CD8-positive, alpha-beta T cell (primary cell): ENCODE measurements at regions of chr4 and their contacts with region 1.

Region 1: GRCh38 chr4:70651864-70652506 is 14.3 kb downstream of the JCHAIN start:
- DNase-seq: peak in 2 of 9 experiments; percentile 38 to 54
- ATAC-seq: no peak
- H3K4me3 ChIP-seq: no peak overlapping the region
- H3K4me3 Mint-ChIP-seq: no peak overlapping the region
- H3K27ac ChIP-seq: no peak overlapping the region
- H3K27ac Mint-ChIP-seq: no peak overlapping the region
- H3K4me1 ChIP-seq: no peaks in the 10 kb centered on the region
- H3K4me1 Mint-ChIP-seq: peaks cover 6% of the 10 kb centered on the region
- H3K27me3 ChIP-seq: peaks cover 0 to 4% of the 10 kb centered on the region in 2 experiments
- H3K27me3 Mint-ChIP-seq: no peaks in the 10 kb centered on the region
- CTCF ChIP-seq: peak; percentile 68

Region 2: GRCh38 chr4:69497076-69497475 is 1154.9 kb before region 1 on chr4:
- CTCF ChIA-PET with region 1: no interaction called
- POLR2A ChIA-PET with region 1: no interaction called
- intact Hi-C with region 1: no loop called
- DNase-seq: no peak
- ATAC-seq: no peak
- H3K4me3 ChIP-seq: no peak overlapping the region
- H3K4me3 Mint-ChIP-seq: no peak overlapping the region
- H3K27ac ChIP-seq: no peak overlapping the region
- H3K27ac Mint-ChIP-seq: no peak overlapping the region
- H3K4me1 ChIP-seq: no peaks in the 10 kb centered on the region
- H3K4me1 Mint-ChIP-seq: no peaks in the 10 kb centered on the region
- H3K27me3 ChIP-seq: no peaks in the 10 kb centered on the region
- H3K27me3 Mint-ChIP-seq: no peaks in the 10 kb centered on the region
- CTCF ChIP-seq: no peak

Region 3: GRCh38 chr4:70449220-70449619 is 202.8 kb before region 1 on chr4:
- CTCF ChIA-PET with region 1: no interaction called
- POLR2A ChIA-PET with region 1: no interaction called
- intact Hi-C with region 1: no loop called
- DNase-seq: no peak
- ATAC-seq: no peak
- H3K4me3 ChIP-seq: no peak overlapping the region
- H3K4me3 Mint-ChIP-seq: no peak overlapping the region
- H3K27ac ChIP-seq: no peak overlapping the region
- H3K27ac Mint-ChIP-seq: no peak overlapping the region
- H3K4me1 ChIP-seq: no peaks in the 10 kb centered on the region
- H3K4me1 Mint-ChIP-seq: no peaks in the 10 kb centered on the region
- H3K27me3 ChIP-seq: no peaks in the 10 kb centered on the region
- H3K27me3 Mint-ChIP-seq: no peaks in the 10 kb centered on the region
- CTCF ChIP-seq: no peak

Region 4: DNA sequence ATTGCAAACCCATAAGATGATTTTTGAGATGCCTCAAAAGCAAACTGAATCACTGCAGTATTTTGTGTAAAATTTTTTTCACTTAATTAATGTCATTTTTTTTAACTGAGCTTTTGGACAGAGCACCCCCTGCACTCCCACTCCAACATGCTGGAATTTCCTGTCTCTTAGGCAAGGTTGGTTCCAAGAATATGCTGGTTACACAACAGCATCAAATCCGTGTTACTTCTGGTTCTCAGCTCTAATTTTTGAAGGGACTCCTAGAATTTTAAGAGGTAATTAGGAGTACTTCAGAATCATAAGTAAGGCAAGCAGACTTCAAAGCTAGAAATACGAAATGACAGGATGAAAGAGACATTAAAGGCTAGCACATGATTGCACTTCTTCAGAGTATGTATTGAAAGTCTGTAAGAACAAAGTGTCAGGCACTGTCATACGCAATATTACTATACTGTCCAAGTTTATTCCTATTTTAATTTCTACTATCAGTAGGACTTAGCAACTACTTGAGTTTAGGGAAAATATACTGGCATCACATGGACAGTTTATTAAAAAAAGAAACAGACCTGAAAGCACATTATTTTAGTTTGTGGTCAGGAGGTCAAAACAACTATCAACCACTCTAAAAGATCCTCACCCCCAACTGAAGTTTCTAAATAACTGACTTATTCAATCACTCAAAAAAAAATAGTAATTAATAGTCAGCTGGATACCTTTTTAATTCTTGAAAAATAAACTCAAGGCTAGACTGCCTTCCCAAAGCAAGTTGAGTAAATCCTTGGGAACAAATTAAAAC is 16.0 kb after region 1 on chr4:
- CTCF ChIA-PET with region 1: interaction called, 14 read pairs
- POLR2A ChIA-PET with region 1: no interaction called
- intact Hi-C with region 1: no loop called
- DNase-seq: no peak
- ATAC-seq: no peak
- H3K4me3 ChIP-seq: no peak overlapping the region
- H3K4me3 Mint-ChIP-seq: no peak overlapping the region
- H3K27ac ChIP-seq: no peak overlapping the region
- H3K27ac Mint-ChIP-seq: no peak overlapping the region
- H3K4me1 ChIP-seq: no peaks in the 10 kb centered on the region
- H3K4me1 Mint-ChIP-seq: peaks cover 4% of the 10 kb centered on the region
- H3K27me3 ChIP-seq: no peaks in the 10 kb centered on the region
- H3K27me3 Mint-ChIP-seq: no peaks in the 10 kb centered on the region
- CTCF ChIP-seq: no peak

Region 5: DNA sequence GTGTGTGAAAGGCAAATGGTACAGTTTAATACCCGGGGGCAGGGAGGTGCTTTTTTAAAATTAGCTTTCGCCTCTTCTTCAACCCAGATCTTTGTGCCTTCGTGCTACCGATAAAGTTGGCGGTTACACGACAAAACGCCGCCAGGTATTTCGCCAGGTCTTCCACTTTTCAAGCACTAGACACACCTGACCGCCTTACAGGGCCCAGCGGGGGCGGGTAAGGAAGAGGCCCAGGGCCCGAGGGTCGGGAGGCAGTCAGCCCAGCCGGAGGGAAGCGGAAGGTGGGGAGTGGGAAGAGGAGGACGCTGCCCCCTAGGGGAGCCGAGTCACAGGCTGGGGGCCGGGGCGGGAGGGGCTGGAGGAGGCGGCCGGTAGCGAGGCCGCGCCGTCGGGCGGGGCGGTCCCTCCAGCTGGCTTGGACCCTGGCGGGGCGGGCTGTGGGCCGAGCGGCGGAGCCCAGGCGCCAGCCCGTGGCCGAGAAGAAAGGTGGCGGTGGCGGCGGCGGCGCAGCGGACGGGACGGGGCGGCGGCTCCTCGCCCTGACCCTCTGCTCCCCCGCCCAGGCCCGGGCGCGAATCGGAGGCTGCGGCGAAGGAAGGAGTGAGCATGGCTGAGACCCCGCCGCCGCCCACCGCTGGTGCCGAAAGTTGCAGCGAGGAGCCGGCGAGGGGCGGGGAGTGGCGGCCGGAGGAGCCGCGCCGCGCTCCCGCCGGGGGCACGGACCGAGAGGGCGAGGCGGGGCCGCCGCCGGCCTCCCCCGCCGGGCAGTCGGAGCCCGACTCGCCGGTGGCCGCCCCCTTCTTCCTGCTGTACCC is 52.6 kb after region 1 on chr4:
- CTCF ChIA-PET with region 1: interaction called, 6 read pairs
- POLR2A ChIA-PET with region 1: no interaction called
- intact Hi-C with region 1: loop called in 1 of 2 experiments (anchors 2 kb)
- DNase-seq: peak; percentile 32 to 84 (median 62)
- ATAC-seq: peak; percentile 45
- H3K4me3 ChIP-seq: peak overlapping the region; percentile 53 to 64
- H3K4me3 Mint-ChIP-seq: peak overlapping the region; percentile 93
- H3K27ac ChIP-seq: peak overlapping the region; percentile 59 to 86
- H3K27ac Mint-ChIP-seq: peak overlapping the region; percentile 88
- H3K4me1 ChIP-seq: peaks cover 29% of the 10 kb centered on the region
- H3K4me1 Mint-ChIP-seq: peaks cover 28% of the 10 kb centered on the region
- H3K27me3 ChIP-seq: no peaks in the 10 kb centered on the region
- H3K27me3 Mint-ChIP-seq: no peaks in the 10 kb centered on the region
- CTCF ChIP-seq: no peak

Region 6: GRCh38 chr4:70927502-70928137 is 275.6 kb after region 1 on chr4:
- CTCF ChIA-PET with region 1: no interaction called
- POLR2A ChIA-PET with region 1: no interaction called
- intact Hi-C with region 1: loop called (anchors 2 to 5 kb)
- DNase-seq: peak in 6 of 9 experiments; percentile 1 to 55 (median 20)
- ATAC-seq: peak; percentile 78
- H3K4me3 ChIP-seq: no peak overlapping the region
- H3K4me3 Mint-ChIP-seq: peak overlapping the region; percentile 38
- H3K27ac ChIP-seq: no peak overlapping the region
- H3K27ac Mint-ChIP-seq: peak overlapping the region; percentile 19
- H3K4me1 ChIP-seq: peaks cover 14% of the 10 kb centered on the region
- H3K4me1 Mint-ChIP-seq: peaks cover 44% of the 10 kb centered on the region
- H3K27me3 ChIP-seq: no peaks in the 10 kb centered on the region
- H3K27me3 Mint-ChIP-seq: no peaks in the 10 kb centered on the region
- CTCF ChIP-seq: no peak

Region 7: DNA sequence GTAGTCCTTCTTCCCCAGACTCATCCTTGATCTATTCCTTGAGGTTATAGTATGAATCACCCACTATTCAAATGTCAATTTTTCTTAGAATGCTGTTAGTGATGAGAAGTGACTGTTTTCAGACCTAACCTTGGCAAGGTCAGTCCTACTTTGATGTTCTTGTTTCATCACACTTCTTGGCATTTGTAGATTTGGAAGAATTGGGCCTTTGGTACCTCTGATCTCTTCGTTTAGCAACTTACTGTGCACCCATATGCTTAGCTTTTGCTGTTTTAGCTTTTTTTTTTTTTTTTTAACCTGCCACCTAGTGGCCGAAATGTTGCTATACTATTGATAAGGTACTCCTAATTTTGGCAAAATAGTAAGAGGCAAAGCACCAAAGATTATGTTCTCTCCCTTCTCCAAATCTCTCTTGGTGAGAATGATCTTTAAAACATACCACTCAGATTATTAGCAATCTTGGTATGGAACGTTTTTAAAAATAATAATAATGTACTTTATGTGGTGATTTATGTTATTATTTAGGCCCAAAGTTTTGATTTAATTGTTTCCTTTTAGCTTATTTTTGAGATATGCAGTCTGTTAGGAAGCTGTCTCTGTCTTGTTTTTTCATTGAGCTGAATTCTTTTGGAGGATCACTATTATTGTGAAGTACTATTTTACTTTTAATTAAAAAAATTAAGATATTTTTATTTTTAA is 358.1 kb after region 1 on chr4:
- CTCF ChIA-PET with region 1: interaction called, 10 read pairs
- POLR2A ChIA-PET with region 1: no interaction called
- intact Hi-C with region 1: loop called (anchors 1 to 2 kb)
- DNase-seq: peak in 2 of 9 experiments; percentile 65 to 74
- ATAC-seq: peak; percentile 74
- H3K4me3 ChIP-seq: no peak overlapping the region
- H3K4me3 Mint-ChIP-seq: peak overlapping the region; percentile 5
- H3K27ac ChIP-seq: no peak overlapping the region
- H3K27ac Mint-ChIP-seq: peak overlapping the region; percentile 46
- H3K4me1 ChIP-seq: peaks cover 20% of the 10 kb centered on the region
- H3K4me1 Mint-ChIP-seq: peaks cover 50% of the 10 kb centered on the region
- H3K27me3 ChIP-seq: no peaks in the 10 kb centered on the region
- H3K27me3 Mint-ChIP-seq: no peaks in the 10 kb centered on the region
- CTCF ChIP-seq: peak; percentile 72

Region 8: GRCh38 chr4:72302981-72303704 is 1651.2 kb after region 1 on chr4:
- CTCF ChIA-PET with region 1: no interaction called
- POLR2A ChIA-PET with region 1: no interaction called
- intact Hi-C with region 1: loop called in 1 of 2 experiments (anchors 5 kb)
- DNase-seq: peak in 7 of 9 experiments; percentile 7 to 57 (median 40)
- ATAC-seq: peak; percentile 66
- H3K4me3 ChIP-seq: no peak overlapping the region
- H3K4me3 Mint-ChIP-seq: no peak overlapping the region
- H3K27ac ChIP-seq: no peak overlapping the region
- H3K27ac Mint-ChIP-seq: no peak overlapping the region
- H3K4me1 ChIP-seq: no peaks in the 10 kb centered on the region
- H3K4me1 Mint-ChIP-seq: no peaks in the 10 kb centered on the region
- H3K27me3 ChIP-seq: no peaks in the 10 kb centered on the region
- H3K27me3 Mint-ChIP-seq: peaks cover 2% of the 10 kb centered on the region
- CTCF ChIP-seq: peak; percentile 77